BJ (cell line): ENCODE measurements at regions of chr11 and their contacts with region 1.

Region 1: DNA sequence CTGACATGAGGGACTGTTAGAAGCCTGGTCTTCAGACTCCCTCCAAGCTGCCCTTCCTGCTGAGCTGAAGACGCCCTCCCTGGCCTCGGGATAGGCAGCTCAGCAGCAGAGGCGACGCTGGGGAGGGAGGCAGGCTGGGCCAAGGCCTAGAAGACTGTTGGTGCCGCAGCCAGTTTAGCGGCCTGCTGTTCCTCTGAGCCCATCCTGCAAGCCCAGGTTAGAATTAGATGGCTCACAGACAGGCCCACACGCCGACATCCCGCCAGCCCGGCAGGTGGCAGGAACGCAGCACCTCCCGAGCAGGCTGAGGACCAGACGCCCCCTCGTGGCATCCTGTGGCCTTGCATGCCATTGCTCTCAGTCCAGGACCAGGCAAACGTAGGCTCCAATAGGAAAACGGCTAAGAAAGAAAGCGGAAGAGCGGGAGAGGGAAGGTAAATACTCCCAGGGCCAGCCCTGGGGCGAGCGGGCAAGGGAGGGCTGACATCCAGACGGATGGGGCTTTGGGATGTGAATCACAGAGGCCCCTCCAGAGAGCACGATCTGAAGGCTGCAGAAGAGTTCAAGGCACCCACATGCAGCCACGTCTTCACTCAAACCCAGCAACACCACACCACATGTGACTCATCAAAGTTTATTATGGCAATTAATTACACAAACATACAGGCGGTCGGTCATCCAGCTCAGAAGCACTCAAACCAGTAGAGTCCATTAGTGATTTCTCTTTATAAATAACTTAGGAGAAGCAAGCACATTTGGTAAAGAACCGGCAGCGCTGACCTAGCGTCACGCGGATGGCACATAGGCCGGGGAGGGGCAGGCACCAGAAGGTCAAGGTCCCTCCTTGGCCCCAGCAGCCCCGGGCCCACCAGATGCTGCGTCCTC is 27.6 kb downstream of the CD5 start:
- DNase-seq: peak; percentile 77
- H3K4me3 ChIP-seq: peak overlapping the region; percentile 2; the same call in 1 of the 2 replicates
- H3K27me3 ChIP-seq: peaks cover 6% of the 10 kb centered on the region
- CTCF ChIP-seq: peak; percentile 100

Region 2: DNA sequence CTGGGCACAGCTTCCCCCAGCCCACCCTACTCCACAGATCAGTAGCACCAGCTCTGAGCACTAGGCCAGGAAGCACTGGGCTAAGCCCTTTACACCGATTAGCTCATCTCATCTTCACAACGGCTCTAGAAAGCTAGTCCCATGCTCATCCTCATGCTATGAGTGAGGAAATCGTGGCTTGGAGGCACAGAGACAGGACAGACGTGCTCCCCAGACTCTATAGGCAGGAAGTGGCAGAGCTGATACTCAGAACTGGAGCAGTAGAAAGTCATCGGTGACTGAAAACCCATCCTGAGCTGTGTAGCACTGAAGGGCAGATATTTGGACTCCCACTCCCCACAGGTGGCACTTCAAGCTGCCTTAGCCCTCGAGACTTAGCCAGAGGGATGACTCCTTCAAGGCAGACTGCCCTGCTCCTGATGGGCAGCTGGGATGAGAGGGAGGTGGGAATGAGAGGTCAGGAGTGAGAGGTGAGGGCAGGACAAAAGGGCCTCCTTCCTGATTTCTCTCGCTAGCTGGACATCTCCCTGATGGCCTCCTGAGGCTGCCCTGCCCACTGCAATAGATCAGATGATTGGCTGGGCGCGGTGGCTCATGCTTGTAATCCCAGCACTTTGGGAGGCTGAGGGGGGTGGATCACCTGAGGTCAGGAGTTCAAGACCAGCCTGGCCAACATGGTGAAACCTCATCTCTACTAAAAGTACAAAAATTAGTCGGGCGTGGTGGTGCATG is 17.9 kb before region 1 on chr11:
- CTCF ChIA-PET with region 1: interaction called, 11 read pairs
- POLR2A ChIA-PET with region 1: no interaction called
- DNase-seq: no peak
- H3K4me3 ChIP-seq: no peak overlapping the region
- H3K27me3 ChIP-seq: peaks cover 7% of the 10 kb centered on the region
- CTCF ChIP-seq: no peak

Region 3: DNA sequence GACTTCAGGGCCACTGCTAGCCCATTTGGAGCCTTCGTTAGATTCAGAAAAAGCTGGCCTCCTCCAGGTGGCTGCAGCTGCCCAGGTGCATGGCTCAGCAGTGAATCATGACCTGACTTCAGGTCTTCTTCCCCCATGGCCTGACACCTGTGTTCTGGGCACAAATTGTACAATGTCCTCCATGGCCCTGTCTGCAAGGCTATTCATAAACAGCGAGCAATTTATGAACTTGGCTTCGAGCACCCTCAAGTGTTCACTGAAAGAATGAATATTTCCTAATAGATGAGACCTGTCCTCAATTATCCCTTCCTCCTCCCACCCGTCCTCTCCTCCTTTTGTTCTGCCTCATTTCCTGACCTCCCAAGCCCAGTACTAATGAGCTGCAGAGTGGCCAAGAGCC is 43.6 kb after region 1 on chr11:
- CTCF ChIA-PET with region 1: interaction called, 10 read pairs
- POLR2A ChIA-PET with region 1: no interaction called
- DNase-seq: no peak
- H3K4me3 ChIP-seq: no peak overlapping the region
- H3K27me3 ChIP-seq: peaks cover 10% of the 10 kb centered on the region
- CTCF ChIP-seq: peak; percentile 24

Region 4: DNA sequence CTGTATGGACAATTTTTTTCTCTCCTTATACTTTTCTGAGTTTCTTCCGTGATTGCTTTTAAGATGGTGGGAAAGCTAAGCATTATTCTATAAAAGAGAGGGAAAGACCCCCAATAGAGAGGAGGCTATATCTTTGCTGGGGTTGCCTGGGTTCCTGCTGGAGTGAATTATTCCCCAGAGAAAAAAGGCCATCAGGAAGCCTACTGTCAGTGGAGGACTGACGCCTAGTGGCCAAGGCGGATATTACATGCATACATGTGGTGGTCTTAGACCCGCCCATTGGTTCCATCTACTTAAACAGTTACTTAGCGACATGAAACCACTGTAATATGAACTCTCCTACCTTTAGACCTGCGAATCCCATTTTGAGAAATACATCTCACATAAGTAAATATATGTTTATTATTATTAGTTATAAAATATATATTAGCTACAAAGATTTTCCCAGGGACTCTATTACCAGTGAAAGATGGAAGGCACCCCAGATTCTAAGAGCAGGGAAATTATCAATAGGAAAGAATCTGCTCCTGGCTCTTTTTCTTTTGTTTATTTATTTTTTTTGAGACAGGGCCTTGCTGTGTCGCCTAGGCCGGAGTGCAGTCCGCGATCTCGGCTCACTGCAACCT is 57.7 kb after region 1 on chr11:
- CTCF ChIA-PET with region 1: interaction called, 31 read pairs
- POLR2A ChIA-PET with region 1: no interaction called
- DNase-seq: peak; percentile 16
- H3K4me3 ChIP-seq: no peak overlapping the region
- H3K27me3 ChIP-seq: no peaks in the 10 kb centered on the region; the same call in 1 of the 2 replicates
- CTCF ChIP-seq: peak; percentile 94